Activated CD4-positive, alpha-beta T cell treated with anti-CD3 and anti-CD28 coated beads for 36 hours (primary cell): ENCODE measurements at regions of chr15 and their contacts with region 1.

Region 1: DNA sequence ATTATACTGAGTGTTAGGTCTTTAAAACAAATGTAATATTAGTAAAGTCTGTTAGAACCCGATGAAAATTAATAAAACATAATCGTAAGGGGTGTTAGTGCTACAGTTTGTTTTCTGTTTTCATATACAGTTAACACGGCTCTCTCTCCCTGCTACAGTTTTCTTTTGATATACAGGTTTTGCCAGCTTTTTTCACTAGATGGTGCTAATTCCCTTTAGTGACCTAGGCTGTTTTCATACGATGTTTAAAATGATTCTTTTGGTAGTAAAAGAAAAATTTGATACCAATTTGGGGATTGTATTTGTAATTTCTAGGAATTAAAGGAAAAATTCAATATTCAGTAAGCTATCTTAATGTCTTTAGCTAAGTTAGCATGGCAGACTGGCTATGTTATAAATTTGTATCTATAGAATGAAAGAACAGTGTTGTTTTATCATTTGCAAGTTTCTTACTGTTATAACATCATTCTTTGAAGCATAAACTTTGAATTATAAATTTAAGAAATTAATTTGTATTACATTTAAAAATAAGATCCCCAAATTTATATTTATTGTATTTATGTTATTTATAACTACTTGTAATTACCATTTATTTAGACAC is 11.5 kb downstream of the APH1B start:
- DNase-seq: no peak
- ATAC-seq: peak; percentile 81
- H3K4me3 Mint-ChIP-seq: no peak overlapping the region
- H3K27ac Mint-ChIP-seq: no peak overlapping the region
- H3K4me1 Mint-ChIP-seq: peaks cover 8% of the 10 kb centered on the region
- H3K27me3 Mint-ChIP-seq: no peaks in the 10 kb centered on the region

Region 2: DNA sequence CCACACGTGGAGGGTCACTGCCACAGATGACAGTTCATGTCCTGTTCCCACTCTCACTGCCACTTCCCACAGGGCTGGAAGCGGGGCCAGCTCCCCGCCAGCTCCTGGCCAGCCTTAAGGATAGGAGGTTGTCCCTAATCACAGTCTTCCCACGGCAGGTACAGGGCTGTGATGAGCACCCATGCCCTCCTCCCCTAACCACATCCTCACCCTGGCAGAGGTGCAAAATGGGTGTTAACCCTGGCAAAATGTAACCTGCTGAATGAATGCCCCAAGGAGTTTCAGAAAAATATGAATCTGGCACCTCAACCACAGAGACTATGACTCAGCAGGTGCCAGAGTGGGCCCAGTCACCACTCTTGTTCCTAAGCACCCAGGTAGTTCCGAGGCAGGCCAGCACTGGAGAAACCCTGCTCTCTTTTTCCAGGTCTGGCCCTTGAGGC is 431.4 kb before region 1 on chr15:
- CTCF ChIA-PET with region 1: no interaction called
- POLR2A ChIA-PET with region 1: no interaction called
- intact Hi-C with region 1: no loop called
- DNase-seq: peak; percentile 33
- ATAC-seq: peak; percentile 69
- H3K4me3 Mint-ChIP-seq: no peak overlapping the region
- H3K27ac Mint-ChIP-seq: no peak overlapping the region
- H3K4me1 Mint-ChIP-seq: peaks cover 4% of the 10 kb centered on the region
- H3K27me3 Mint-ChIP-seq: peaks cover 24% of the 10 kb centered on the region

Region 3: GRCh38 chr15:63277038-63277892 is 11.6 kb before region 1 on chr15 and contains the start of gene APH1B:
- CTCF ChIA-PET with region 1: interaction called, 10 read pairs
- POLR2A ChIA-PET with region 1: no interaction called
- intact Hi-C with region 1: no loop called
- DNase-seq: peak; percentile 80
- ATAC-seq: peak; percentile 83
- H3K4me3 Mint-ChIP-seq: peak within 1 kb of the TSS; percentile 78
- H3K27ac Mint-ChIP-seq: peak within 1 kb of the TSS; percentile 88
- H3K4me1 Mint-ChIP-seq: peaks cover 29% of the 10 kb centered on the region
- H3K27me3 Mint-ChIP-seq: no peaks in the 10 kb centered on the region
- total RNA-seq, gene APH1B: 6.5 to 7.8 TPM

Region 4: GRCh38 chr15:63600616-63601025 is 311.7 kb after region 1 on chr15:
- CTCF ChIA-PET with region 1: no interaction called
- POLR2A ChIA-PET with region 1: no interaction called
- intact Hi-C with region 1: loop called (anchors 5 to 10 kb)
- DNase-seq: peak; percentile 95
- ATAC-seq: peak; percentile 74
- H3K4me3 Mint-ChIP-seq: peak overlapping the region; percentile 88
- H3K27ac Mint-ChIP-seq: peak overlapping the region; percentile 96
- H3K4me1 Mint-ChIP-seq: peaks cover 54% of the 10 kb centered on the region
- H3K27me3 Mint-ChIP-seq: no peaks in the 10 kb centered on the region